ENCODE measurements at regions of chr16 and their contacts with region 1.

Region 1: DNA sequence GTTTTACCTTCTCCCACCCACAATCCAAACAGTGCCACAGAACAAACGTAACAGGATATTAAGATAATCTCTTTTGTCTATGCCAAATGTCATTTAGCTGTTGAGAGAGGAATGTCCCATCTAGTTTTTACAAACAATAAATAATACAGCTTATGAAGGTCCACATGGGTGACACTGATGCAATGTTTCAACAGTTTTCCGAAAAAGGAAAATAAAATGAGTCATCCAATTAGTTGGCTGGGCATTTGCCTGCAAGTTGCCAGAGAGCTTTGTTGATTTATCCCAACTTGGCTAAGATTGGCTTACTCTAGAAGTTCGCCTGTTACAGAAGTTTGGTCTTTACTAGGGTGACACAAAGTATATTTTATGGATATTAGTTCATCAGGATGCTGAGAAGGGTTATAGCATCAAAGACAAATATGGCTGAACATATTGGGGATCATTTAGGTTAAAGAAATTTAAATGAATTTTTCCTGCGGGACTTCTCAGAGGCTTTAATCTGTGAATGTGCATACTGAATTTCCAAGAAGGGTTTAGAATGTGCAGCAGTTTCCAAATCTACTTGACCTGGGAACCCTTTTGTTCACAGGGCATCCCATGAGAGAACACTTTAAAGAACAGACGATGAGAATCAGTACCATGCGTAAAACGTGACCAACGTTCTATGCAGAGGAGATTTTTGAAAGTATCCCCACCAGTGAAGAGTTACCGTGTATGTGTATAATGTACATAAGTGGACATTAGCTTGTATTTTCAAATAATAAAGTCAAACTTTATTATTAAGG is 73.1 kb downstream of the CDH13 start:
- DNase-seq: peak; percentile 80
- ATAC-seq: peak; percentile 50
- H3K4me3 ChIP-seq: no peak overlapping the region
- H3K27ac ChIP-seq: peak overlapping the region; percentile 44; the same call in 1 of the 2 replicates
- H3K4me1 ChIP-seq: peaks cover 15% of the 10 kb centered on the region
- H3K27me3 ChIP-seq: no peaks in the 10 kb centered on the region
- CTCF ChIP-seq: no peak
- POLR2A ChIP-seq: no peak
- RAD21 ChIP-seq: no peak

Region 2: DNA sequence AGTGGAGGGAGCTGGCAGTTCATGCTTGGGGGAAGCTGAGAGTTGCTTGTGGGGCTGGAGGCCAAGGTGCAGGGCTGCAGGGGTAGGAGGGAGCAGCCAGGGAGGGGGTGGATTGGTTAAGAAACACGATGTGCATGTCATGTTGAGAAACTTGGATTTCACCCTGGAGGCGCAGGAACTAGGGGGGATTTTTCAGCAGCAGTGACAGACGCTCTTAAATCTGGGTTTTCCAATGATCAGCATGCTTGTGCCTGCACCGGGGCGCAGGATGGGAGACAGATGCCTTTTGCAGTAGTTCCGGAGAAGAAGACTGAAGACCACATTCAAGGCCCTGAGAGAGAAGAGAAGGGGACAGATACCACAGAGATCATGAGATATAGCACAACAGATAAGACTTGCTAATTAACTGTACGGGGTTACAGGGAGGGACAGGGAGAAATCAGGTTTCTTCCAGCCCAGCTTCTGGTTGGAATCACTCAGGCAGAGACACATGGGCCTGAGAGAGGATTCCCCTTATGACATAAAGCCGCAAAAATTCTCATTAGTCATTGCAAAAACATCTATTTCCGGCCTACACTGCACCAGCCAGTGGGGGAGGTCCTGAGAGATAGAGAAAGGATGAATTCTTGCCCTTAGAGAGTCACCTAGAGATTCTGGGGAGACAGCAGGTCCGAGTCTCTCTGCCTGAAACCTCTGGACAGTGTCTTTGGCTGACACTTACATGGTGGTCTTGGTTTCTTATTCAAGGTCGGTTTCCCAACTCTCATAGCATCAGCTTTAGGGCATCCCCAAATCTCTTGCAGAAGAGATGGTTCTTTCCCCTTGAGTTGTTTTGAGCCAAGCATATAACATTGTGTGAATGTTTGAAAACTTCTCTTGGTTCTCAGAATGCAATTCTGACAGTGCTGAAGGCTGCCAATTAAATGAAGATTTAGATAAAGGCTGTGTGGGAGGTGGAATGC is 46.1 kb before region 1 on chr16:
- CTCF ChIA-PET with region 1: no interaction called
- POLR2A ChIA-PET with region 1: interaction called, 3 read pairs
- dilution Hi-C with region 1: no loop called
- in situ Hi-C with region 1: no loop called
- intact Hi-C with region 1: loop called (anchors 2 kb)
- DNase-seq: peak; percentile 95
- ATAC-seq: peak; percentile 77
- H3K4me3 ChIP-seq: no peak overlapping the region
- H3K27ac ChIP-seq: peak overlapping the region; percentile 85
- H3K4me1 ChIP-seq: peaks cover 33% of the 10 kb centered on the region
- H3K27me3 ChIP-seq: no peaks in the 10 kb centered on the region
- CTCF ChIP-seq: no peak
- POLR2A ChIP-seq: peak; percentile 70
- RAD21 ChIP-seq: peak; percentile 22

Region 3: GRCh38 chr16:82748026-82748425 is 48.1 kb after region 1 on chr16:
- CTCF ChIA-PET with region 1: no interaction called
- POLR2A ChIA-PET with region 1: no interaction called
- dilution Hi-C with region 1: no loop called
- in situ Hi-C with region 1: no loop called
- intact Hi-C with region 1: no loop called
- DNase-seq: peak; percentile 66
- ATAC-seq: peak; percentile 57; the same call in 1 of the 2 replicates
- H3K4me3 ChIP-seq: no peak overlapping the region
- H3K27ac ChIP-seq: no peak overlapping the region
- H3K4me1 ChIP-seq: no peaks in the 10 kb centered on the region
- H3K27me3 ChIP-seq: no peaks in the 10 kb centered on the region
- CTCF ChIP-seq: peak; percentile 42
- POLR2A ChIP-seq: no peak
- RAD21 ChIP-seq: peak; percentile 43

Region 4: DNA sequence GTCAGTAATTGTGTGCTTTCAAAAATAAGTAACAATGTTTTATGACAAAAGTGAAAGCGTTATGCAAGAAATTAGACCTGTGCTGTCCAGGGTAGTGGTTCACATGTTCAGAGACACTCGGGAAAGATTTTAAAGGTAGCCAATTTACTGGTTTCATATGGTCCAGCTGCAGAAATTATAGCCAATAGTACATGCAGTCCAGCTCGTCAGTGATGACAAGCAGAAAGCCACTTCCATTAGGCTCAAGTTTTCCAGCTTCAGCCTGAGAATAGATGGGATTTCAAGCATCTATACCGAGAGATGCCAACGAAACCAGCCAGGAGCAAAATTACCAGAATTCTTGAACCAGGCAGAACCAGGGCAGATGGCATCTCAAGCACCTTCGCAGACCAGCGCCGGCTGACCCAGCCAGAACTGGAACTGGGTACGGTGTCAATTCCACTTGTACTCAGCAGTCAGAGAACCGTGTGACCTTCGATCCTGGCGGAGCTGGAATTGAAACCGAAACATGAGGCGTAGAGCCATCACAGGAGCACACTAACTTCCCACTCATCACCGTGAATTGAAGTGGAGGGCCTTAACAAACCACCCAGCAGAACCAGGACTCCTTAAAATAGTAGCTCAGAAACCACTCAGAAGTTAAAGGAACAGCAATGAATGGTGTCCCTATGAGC is 900.0 kb after region 1 on chr16:
- CTCF ChIA-PET with region 1: no interaction called
- POLR2A ChIA-PET with region 1: no interaction called
- dilution Hi-C with region 1: no loop called
- in situ Hi-C with region 1: no loop called
- intact Hi-C with region 1: no loop called
- DNase-seq: no peak
- ATAC-seq: no peak
- H3K4me3 ChIP-seq: no peak overlapping the region
- H3K27ac ChIP-seq: no peak overlapping the region
- H3K4me1 ChIP-seq: no peaks in the 10 kb centered on the region
- H3K27me3 ChIP-seq: no peaks in the 10 kb centered on the region
- CTCF ChIP-seq: no peak
- POLR2A ChIP-seq: no peak
- RAD21 ChIP-seq: no peak